ENCODE measurements at regions of chr11 and their contacts with region 1.

Region 1: GRCh38 chr11:117200813-117201657 is 1.9 kb downstream of the TAGLN start:
- DNase-seq: no peak
- ATAC-seq: no peak
- H3K4me3 ChIP-seq: no peak overlapping the region
- H3K4me3 Mint-ChIP-seq: no peak overlapping the region
- H3K27ac ChIP-seq: no peak overlapping the region
- H3K27ac Mint-ChIP-seq: no peak overlapping the region
- H3K4me1 ChIP-seq: no peaks in the 10 kb centered on the region
- H3K4me1 Mint-ChIP-seq: no peaks in the 10 kb centered on the region
- H3K27me3 ChIP-seq: no peaks in the 10 kb centered on the region
- H3K27me3 Mint-ChIP-seq: no peaks in the 10 kb centered on the region
- CTCF ChIP-seq: no peak

Region 2: GRCh38 chr11:117134431-117134830 is 66.6 kb before region 1 on chr11:
- CTCF ChIA-PET with region 1: no interaction called
- POLR2A ChIA-PET with region 1: no interaction called
- intact Hi-C with region 1: loop called in 1 of 2 experiments (anchors 5 kb)
- DNase-seq: no peak
- ATAC-seq: no peak
- H3K4me3 ChIP-seq: no peak overlapping the region
- H3K4me3 Mint-ChIP-seq: no peak overlapping the region
- H3K27ac ChIP-seq: no peak overlapping the region
- H3K27ac Mint-ChIP-seq: no peak overlapping the region
- H3K4me1 ChIP-seq: no peaks in the 10 kb centered on the region
- H3K4me1 Mint-ChIP-seq: peaks cover 3% of the 10 kb centered on the region
- H3K27me3 ChIP-seq: peaks cover 0 to 3% of the 10 kb centered on the region in 2 experiments
- H3K27me3 Mint-ChIP-seq: peaks cover 2% of the 10 kb centered on the region
- CTCF ChIP-seq: no peak

Region 3: GRCh38 chr11:117444711-117445658 is 243.9 kb after region 1 on chr11:
- CTCF ChIA-PET with region 1: no interaction called
- POLR2A ChIA-PET with region 1: no interaction called
- intact Hi-C with region 1: no loop called
- DNase-seq: no peak
- ATAC-seq: no peak
- H3K4me3 ChIP-seq: no peak overlapping the region
- H3K4me3 Mint-ChIP-seq: no peak overlapping the region
- H3K27ac ChIP-seq: no peak overlapping the region
- H3K27ac Mint-ChIP-seq: no peak overlapping the region
- H3K4me1 ChIP-seq: no peaks in the 10 kb centered on the region
- H3K4me1 Mint-ChIP-seq: no peaks in the 10 kb centered on the region
- H3K27me3 ChIP-seq: no peaks in the 10 kb centered on the region
- H3K27me3 Mint-ChIP-seq: peaks cover 15% of the 10 kb centered on the region
- CTCF ChIP-seq: no peak